Heart right ventricle (tissue), 16 donors: ENCODE measurements at regions of chr1 and their contacts with region 1.

Region 1: GRCh38 chr1:174469687-174470086 is 21.9 kb downstream of the GPR52 start:
- DNase-seq: no peak
- ATAC-seq: peak in 7 of 8 donors; percentile 39 to 79 (median 56)
- H3K4me3 ChIP-seq: no peak overlapping the region
- H3K27ac ChIP-seq: no peak overlapping the region
- H3K4me1 ChIP-seq: peaks cover 0 to 18% (median 0%) of the 10 kb centered on the region in 9 donors
- H3K27me3 ChIP-seq: no peaks in the 10 kb centered on the region
- CTCF ChIP-seq: no peak

Region 2: DNA sequence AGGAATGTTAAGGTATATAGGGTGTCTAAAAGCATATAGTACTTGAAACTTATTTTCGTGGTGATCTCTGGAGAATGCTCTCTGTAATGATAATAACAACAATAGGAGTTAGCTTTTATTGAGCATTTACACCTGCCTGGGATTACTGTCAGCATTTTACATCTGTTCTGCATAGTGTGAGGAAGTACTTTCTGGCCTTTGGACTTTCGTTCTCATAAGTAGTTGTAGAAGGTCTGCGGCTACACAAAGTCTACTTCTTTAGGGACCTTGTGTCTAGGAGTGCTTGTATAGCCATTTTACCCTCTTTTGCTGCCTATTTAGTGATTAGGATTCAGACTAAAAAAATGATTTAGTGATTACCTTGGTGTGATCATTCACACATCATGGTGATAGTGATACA is 125.5 kb before region 1 on chr1:
- intact Hi-C with region 1: no loop called
- DNase-seq: no peak
- ATAC-seq: no peak
- H3K4me3 ChIP-seq: no peak overlapping the region
- H3K27ac ChIP-seq: no peak overlapping the region
- H3K4me1 ChIP-seq: no peaks in the 10 kb centered on the region
- H3K27me3 ChIP-seq: no peaks in the 10 kb centered on the region
- CTCF ChIP-seq: no peak

Region 3: GRCh38 chr1:174448974-174449373 is 20.7 kb before region 1 on chr1:
- intact Hi-C with region 1: loop called in 1 of 10 experiments (anchors 1 kb)
- DNase-seq: no peak
- ATAC-seq: peak in 2 of 8 donors; percentile 65
- H3K4me3 ChIP-seq: no peak overlapping the region
- H3K27ac ChIP-seq: peak overlapping the region in 1 of 10 donors; percentile 13
- H3K4me1 ChIP-seq: peaks cover 0 to 27% (median 3%) of the 10 kb centered on the region in 9 donors
- H3K27me3 ChIP-seq: no peaks in the 10 kb centered on the region
- CTCF ChIP-seq: no peak

Region 4: GRCh38 chr1:174497478-174497877 is 27.8 kb after region 1 on chr1:
- intact Hi-C with region 1: no loop called
- DNase-seq: no peak
- ATAC-seq: peak in 2 of 8 donors; percentile 25 to 27
- H3K4me3 ChIP-seq: no peak overlapping the region
- H3K27ac ChIP-seq: no peak overlapping the region
- H3K4me1 ChIP-seq: peaks cover 0 to 12% (median 6%) of the 10 kb centered on the region in 9 donors
- H3K27me3 ChIP-seq: no peaks in the 10 kb centered on the region
- CTCF ChIP-seq: no peak

Region 5: DNA sequence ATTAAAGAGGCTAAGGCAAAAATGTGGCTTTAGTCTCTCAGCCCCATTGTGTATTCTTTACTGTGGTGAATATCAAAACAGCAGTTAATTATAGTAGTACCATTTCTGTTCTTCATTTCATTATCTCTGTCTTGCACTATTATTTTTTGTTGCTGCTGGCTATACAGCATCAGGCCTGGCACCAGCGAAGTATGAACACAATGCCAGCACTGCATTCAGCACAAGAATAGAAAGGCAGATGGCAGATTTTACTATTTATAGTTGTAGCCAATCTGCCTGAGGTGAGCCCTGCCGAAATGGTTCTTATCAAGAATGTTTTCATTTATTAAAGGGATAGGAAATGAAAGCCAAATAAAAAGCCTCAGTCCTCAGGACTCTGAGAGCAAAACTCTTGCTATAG is 50.2 kb after region 1 on chr1:
- intact Hi-C with region 1: loop called in 1 of 10 experiments (anchors 10 kb)
- DNase-seq: peak in 1 of 2 donors; percentile 22
- ATAC-seq: peak; percentile 87 to 98 (median 91)
- H3K4me3 ChIP-seq: no peak overlapping the region
- H3K27ac ChIP-seq: peak overlapping the region in 8 of 10 donors; percentile 2 to 74 (median 58)
- H3K4me1 ChIP-seq: peaks cover 0 to 29% (median 3%) of the 10 kb centered on the region in 9 donors
- H3K27me3 ChIP-seq: no peaks in the 10 kb centered on the region
- CTCF ChIP-seq: no peak